ENCODE measurements at regions of chr10 and their contacts with region 1.

Region 1: GRCh38 chr10:68901104-68901927 is at the start of gene DDX50:
- DNase-seq: peak; percentile 100
- H3K4me3 Mint-ChIP-seq: peak within 1 kb of the TSS; percentile 96
- H3K27ac Mint-ChIP-seq: peak within 1 kb of the TSS; percentile 99
- H3K4me1 Mint-ChIP-seq: peaks cover 17% of the 10 kb centered on the region
- H3K27me3 Mint-ChIP-seq: no peaks in the 10 kb centered on the region
- CTCF ChIP-seq: no peak
- total RNA-seq, gene DDX50: 50.1 and 66.3 TPM in 2 replicates

Region 2: DNA sequence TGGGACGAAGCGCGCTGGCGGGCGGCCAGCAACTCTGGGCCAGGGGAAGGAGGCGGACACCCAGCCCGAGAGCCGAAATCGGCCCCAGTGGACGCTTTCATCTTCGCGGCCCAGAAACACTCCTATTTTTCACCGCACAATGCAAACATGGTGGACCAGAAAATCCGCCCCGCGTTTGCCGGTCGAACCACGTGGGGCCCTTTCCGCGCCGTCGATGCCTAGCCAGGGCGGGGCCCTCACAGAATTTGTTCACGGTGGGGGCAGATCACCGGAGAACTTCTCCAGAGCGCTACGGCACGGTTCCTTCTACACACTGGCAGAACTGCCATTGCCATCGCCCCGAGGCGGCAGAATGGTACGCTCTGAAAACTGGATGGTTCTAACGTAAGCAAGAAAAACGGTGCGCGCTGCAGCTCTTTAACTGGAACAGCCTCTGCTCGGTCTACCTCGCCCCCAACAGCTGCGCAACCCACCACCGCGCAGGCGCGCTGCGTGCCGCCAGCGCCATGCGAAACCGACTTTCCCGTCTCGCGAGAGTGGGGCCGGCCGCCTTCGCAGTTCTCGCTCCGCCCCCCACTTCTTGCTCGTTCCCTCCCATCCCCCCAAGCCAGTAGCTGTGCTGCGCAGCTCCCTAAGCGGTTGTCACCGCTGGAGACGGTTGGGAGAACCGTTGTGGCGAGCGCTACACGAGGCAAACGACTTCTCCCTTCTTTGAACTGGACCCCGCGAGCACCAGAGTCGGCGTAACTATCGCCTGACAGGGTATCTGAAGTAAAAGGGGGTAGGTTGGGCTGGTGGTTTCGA is 569.7 kb before region 1 on chr10 and contains the start of gene HNRNPH3:
- CTCF ChIA-PET with region 1: interaction called, 3 read pairs
- POLR2A ChIA-PET with region 1: interaction called, 10 read pairs
- intact Hi-C with region 1: no loop called
- DNase-seq: peak; percentile 97
- H3K4me3 Mint-ChIP-seq: peak within 1 kb of the TSS; percentile 97
- H3K27ac Mint-ChIP-seq: peak within 1 kb of the TSS; percentile 99
- H3K4me1 Mint-ChIP-seq: peaks cover 29% of the 10 kb centered on the region
- H3K27me3 Mint-ChIP-seq: no peaks in the 10 kb centered on the region
- CTCF ChIP-seq: no peak
- total RNA-seq, gene HNRNPH3: 216 and 285 TPM in 2 replicates

Region 3: DNA sequence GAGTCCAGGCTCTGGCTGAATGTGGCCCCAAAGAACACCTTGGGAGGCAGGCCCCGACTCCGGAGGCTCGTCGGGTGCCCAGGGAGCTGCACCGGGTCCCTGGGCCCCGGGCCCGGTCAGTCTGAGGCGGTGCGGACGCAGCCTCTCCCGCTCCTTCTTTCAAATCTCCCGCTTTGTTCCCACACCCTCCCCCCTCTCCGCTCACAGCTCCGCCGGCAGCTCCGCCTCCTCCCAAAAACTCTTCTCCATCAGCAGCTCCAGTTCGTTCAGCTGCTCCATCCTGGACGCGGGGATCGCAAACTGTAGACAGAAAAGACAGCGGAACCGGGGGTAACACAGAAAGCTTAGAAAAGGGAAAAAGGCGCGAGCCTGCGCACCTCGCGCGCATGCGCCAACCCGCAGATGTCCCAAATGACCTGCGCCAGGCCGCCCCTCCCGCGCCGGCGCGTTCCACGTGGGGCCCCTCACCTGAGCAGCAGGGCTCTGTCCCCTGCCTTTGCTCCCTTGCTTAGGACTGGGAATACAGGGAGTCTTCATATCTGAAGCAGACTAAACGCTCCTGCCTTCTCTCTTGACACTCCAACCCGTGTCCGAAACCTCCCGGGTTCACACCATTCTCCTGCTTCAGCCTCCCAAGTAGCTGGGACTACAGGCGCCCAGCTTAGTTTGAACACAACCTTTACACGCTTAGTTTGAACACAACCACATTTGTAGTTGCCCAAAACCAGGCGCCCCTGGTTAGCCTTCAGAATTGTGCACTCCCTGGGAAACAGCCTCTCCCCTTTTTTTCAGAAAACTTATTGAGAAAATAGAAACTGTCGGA is 429.5 kb before region 1 on chr10 and contains the start of gene DNA2:
- CTCF ChIA-PET with region 1: no interaction called
- POLR2A ChIA-PET with region 1: no interaction called
- intact Hi-C with region 1: loop called (anchors 2 kb)
- DNase-seq: peak; percentile 70
- H3K4me3 Mint-ChIP-seq: peak within 1 kb of the TSS; percentile 91
- H3K27ac Mint-ChIP-seq: peak within 1 kb of the TSS; percentile 67
- H3K4me1 Mint-ChIP-seq: peaks cover 9% of the 10 kb centered on the region
- H3K27me3 Mint-ChIP-seq: no peaks in the 10 kb centered on the region
- CTCF ChIP-seq: no peak
- total RNA-seq, gene DNA2: 2.6 and 6.9 TPM in 2 replicates

Region 4: GRCh38 chr10:68647672-68648341 is 253.5 kb before region 1 on chr10:
- CTCF ChIA-PET with region 1: interaction called, 4 read pairs
- POLR2A ChIA-PET with region 1: interaction called, 3 read pairs
- intact Hi-C with region 1: loop called (anchors 10 kb)
- DNase-seq: peak; percentile 72
- H3K4me3 Mint-ChIP-seq: peak overlapping the region; percentile 2
- H3K27ac Mint-ChIP-seq: peak overlapping the region; percentile 93
- H3K4me1 Mint-ChIP-seq: peaks cover 21% of the 10 kb centered on the region
- H3K27me3 Mint-ChIP-seq: no peaks in the 10 kb centered on the region
- CTCF ChIP-seq: no peak

Region 5: DNA sequence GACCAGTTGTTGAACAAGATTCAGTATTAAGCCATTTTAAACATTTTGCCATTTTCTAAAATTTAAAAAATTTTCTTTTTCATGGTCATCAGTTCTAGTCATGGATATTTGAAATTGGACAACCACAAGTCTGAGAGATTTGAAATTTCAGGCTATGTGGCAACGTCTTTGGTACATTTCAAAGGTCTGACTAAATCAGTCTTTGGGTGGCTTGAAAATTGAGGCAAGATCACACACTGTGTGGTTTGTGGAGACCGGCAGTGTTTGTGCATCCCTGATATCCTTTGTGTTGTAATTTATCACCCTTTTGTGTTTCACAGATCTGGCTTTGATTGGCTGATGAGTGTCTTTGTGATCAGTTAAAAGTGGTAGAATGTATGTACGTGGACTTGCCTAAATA is 144.6 kb before region 1 on chr10:
- CTCF ChIA-PET with region 1: no interaction called
- POLR2A ChIA-PET with region 1: no interaction called
- intact Hi-C with region 1: no loop called
- DNase-seq: no peak
- H3K4me3 Mint-ChIP-seq: no peak overlapping the region
- H3K27ac Mint-ChIP-seq: no peak overlapping the region
- H3K4me1 Mint-ChIP-seq: no peaks in the 10 kb centered on the region
- H3K27me3 Mint-ChIP-seq: no peaks in the 10 kb centered on the region
- CTCF ChIP-seq: no peak

Region 6: DNA sequence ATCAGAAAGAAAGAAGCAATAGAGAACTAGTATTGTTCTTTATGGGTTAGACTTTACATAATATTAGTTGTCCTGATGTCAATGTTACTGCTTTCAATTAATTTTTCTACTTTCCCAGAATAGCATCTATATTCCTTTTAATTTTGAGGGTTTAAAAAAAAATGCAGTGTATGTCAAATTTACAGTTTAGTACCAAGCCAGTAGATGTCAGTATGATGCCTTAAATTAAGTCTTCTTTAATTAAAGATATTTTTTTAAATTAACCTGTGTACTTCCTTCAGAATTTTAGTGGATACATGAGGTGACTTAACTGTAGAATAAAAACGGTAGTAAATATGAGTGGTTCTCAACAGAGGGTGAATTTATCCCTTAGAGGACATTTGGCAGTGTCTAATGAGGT is 109.2 kb before region 1 on chr10:
- CTCF ChIA-PET with region 1: interaction called, 8 read pairs
- POLR2A ChIA-PET with region 1: interaction called, 8 read pairs
- intact Hi-C with region 1: loop called (anchors 1 kb)
- DNase-seq: no peak
- H3K4me3 Mint-ChIP-seq: no peak overlapping the region
- H3K27ac Mint-ChIP-seq: no peak overlapping the region
- H3K4me1 Mint-ChIP-seq: no peaks in the 10 kb centered on the region
- H3K27me3 Mint-ChIP-seq: no peaks in the 10 kb centered on the region
- CTCF ChIP-seq: no peak

Region 7: DNA sequence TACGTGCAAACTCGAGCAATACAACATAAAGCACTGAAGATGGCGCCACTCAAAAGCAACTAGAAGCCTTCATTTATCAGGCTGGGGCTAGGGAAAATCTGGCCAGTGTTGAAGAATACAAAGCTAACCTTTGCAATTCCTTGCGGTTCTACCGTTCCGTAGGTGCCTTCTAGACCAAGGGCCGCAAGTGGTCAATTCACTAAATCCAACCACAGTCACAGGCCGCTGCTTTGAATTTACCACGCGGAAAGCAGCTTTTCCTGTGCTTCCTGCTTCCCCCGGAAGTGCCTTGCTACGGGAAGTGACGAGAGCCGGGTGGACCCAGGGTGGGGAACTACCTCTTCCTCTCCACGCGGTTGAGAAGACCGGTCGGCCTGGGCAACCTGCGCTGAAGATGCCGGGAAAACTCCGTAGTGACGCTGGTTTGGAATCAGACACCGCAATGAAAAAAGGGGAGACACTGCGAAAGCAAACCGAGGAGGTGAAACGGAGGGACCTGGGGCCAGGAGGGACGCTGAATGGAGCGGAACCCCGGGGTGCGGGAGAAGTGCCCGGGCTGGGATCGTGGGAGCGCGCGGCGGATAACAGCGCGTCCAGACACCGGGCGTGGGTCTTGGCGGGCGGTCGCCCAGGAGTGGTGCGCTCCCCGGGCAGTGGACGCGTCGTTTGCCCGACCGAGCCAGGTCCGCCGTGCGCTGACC is 54.7 kb after region 1 on chr10 and contains the start of gene DDX21:
- CTCF ChIA-PET with region 1: interaction called, 3 read pairs
- POLR2A ChIA-PET with region 1: interaction called, 27 read pairs
- intact Hi-C with region 1: no loop called
- DNase-seq: peak; percentile 93
- H3K4me3 Mint-ChIP-seq: peak within 1 kb of the TSS; percentile 100
- H3K27ac Mint-ChIP-seq: peak within 1 kb of the TSS; percentile 100
- H3K4me1 Mint-ChIP-seq: peaks cover 8% of the 10 kb centered on the region
- H3K27me3 Mint-ChIP-seq: no peaks in the 10 kb centered on the region
- CTCF ChIP-seq: peak; percentile 41
- total RNA-seq, gene DDX21: 144 and 216 TPM in 2 replicates